CD8-positive, alpha-beta T cell (primary cell): ENCODE measurements at regions of chr3 and their contacts with region 1.

Region 1: DNA sequence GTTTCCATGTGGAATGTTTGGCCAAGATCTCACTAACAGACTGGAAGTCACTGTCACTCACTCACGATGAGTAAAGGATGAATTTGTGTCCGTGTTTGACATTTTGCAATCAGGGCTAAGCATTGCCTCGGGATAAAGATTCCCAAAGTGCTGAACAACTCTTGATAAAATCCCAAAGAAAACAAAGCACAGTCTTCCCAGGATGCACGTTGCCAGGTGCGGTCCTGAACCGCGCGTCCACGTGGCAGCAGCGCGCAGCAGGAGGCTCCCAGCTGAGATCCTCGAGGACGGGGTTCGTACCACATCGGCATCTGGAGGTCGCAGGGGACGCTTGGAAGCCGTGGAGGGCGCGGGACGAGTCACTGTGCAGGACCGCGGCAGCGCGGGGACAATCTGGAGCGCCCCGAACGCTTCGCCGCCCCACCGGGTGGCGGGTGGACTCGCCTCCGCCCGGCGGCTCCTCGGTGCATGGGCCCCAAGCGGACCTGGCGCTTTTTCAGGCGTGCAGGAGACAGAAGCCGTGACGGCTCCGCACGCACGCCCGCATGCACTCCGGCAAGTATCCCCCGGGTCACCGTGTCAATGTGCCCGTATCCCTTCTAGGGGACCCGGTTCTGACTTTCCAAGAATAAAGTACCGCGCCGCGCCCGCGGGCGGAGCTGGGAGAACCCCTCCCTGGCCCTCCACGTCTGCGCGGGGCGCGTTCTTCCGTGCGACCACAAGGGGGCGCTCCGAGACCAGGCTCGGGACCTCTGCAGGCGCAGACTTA is 17.7 kb downstream of the CPN2 start:
- DNase-seq: peak; percentile 80 to 95 (median 87)
- ATAC-seq: peak; percentile 97
- H3K4me3 ChIP-seq: peak overlapping the region; percentile 33 to 47
- H3K4me3 Mint-ChIP-seq: peak overlapping the region; percentile 67
- H3K27ac ChIP-seq: no peak overlapping the region
- H3K27ac Mint-ChIP-seq: no peak overlapping the region
- H3K4me1 ChIP-seq: no peaks in the 10 kb centered on the region
- H3K4me1 Mint-ChIP-seq: peaks cover 8% of the 10 kb centered on the region
- H3K27me3 ChIP-seq: peaks cover 4 to 6% of the 10 kb centered on the region in 2 experiments
- H3K27me3 Mint-ChIP-seq: peaks cover 24% of the 10 kb centered on the region
- CTCF ChIP-seq: peak; percentile 99

Region 2: DNA sequence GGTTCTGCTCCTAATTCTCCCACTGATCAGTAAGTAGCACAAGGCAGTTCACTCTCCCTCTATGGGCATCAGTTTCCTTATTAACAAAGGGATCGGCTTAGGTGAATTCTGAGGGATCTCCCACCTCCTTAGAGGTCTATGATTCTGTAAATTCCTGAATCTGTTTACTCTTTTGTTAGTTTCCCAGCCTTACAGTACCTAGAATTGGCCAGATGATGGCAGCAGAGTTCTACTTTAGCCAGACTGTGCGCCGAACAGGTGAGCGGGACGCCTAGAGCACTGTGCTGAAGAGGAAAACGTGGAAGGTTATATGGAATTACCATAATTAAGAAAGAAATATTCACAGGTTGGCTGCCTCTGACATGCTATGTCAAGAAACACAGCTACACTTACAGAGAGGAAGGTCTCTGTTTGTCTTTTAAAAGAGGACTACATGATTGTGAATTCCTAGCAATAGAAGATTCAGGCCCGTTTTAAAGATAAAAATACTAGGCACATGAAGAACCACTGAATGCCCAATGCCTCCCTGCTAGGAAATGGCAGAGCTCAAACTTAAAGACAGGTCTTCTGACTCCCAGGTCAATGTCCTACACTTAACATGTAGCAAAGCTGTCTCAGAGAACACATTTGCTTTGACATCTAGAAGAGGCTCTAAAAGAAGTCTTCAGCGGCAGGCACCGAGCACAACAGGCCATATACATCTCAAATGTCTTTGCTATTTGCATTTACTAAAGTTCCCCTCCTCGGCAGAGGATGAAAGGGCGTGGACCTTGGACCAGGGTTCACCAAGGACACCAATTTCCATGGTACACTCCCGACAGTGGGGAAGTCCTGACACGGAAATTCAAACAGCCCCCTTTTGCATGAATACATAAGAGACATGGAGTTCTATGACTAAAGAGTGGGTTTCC is 1865.9 kb before region 1 on chr3:
- CTCF ChIA-PET with region 1: no interaction called
- POLR2A ChIA-PET with region 1: no interaction called
- intact Hi-C with region 1: loop called in 1 of 2 experiments (anchors 5 kb)
- DNase-seq: peak in 8 of 9 experiments; percentile 12 to 51 (median 36)
- ATAC-seq: peak; percentile 69
- H3K4me3 ChIP-seq: no peak overlapping the region
- H3K4me3 Mint-ChIP-seq: no peak overlapping the region
- H3K27ac ChIP-seq: no peak overlapping the region
- H3K27ac Mint-ChIP-seq: no peak overlapping the region
- H3K4me1 ChIP-seq: no peaks in the 10 kb centered on the region
- H3K4me1 Mint-ChIP-seq: no peaks in the 10 kb centered on the region
- H3K27me3 ChIP-seq: no peaks in the 10 kb centered on the region
- H3K27me3 Mint-ChIP-seq: peaks cover 15% of the 10 kb centered on the region
- CTCF ChIP-seq: peak; percentile 76

Region 3: GRCh38 chr3:194344012-194344411 is 10.6 kb after region 1 on chr3:
- CTCF ChIA-PET with region 1: interaction called, 82 read pairs
- POLR2A ChIA-PET with region 1: no interaction called
- intact Hi-C with region 1: loop called in 1 of 2 experiments (anchors 1 kb)
- DNase-seq: peak; percentile 48 to 83 (median 71)
- ATAC-seq: peak; percentile 67
- H3K4me3 ChIP-seq: no peak overlapping the region
- H3K4me3 Mint-ChIP-seq: no peak overlapping the region
- H3K27ac ChIP-seq: no peak overlapping the region
- H3K27ac Mint-ChIP-seq: no peak overlapping the region
- H3K4me1 ChIP-seq: no peaks in the 10 kb centered on the region
- H3K4me1 Mint-ChIP-seq: no peaks in the 10 kb centered on the region
- H3K27me3 ChIP-seq: no peaks in the 10 kb centered on the region
- H3K27me3 Mint-ChIP-seq: peaks cover 10% of the 10 kb centered on the region
- CTCF ChIP-seq: peak; percentile 97

Region 4: DNA sequence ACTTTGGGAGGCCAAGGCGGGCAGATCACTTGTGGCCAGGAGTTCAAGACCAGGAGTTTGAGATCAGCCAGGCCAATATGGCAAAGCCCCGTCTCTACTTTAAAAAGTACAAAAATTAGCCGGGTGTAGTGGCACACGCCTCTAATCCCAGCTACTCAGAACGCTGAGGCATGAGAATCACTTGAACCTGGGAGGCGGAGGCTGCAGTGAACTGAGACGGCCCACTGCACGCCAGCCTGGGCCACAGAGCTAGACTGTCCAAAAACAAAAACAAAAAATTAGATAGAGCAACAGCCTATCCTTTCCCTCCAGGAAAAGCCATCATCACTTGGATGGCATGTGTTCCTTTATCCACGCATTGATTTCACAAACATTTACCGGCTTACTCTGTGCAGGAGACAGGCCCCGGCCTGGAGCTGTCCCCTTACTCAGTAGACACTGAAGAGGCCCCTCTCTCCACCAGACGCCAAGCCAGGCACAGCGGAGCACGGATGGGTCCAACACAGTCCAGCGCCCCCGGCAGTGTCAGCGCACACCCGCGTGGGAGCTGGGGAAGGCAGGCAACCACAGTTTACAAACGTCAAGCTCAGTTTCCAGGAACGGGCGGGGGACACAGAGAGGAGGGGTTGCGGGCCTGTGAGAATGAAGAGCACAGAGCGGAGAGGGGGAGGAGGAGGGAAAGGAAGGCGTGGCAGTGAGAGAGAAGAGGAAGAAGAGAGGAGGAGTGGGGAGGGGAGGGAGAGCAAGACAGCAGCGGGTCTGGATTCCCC is 62.6 kb after region 1 on chr3:
- CTCF ChIA-PET with region 1: interaction called, 140 read pairs
- POLR2A ChIA-PET with region 1: interaction called, 5 read pairs
- intact Hi-C with region 1: no loop called
- DNase-seq: peak in 8 of 9 experiments; percentile 23 to 80 (median 59)
- ATAC-seq: peak; percentile 72
- H3K4me3 ChIP-seq: peak overlapping the region; percentile 51 to 60
- H3K4me3 Mint-ChIP-seq: peak overlapping the region; percentile 81
- H3K27ac ChIP-seq: peak overlapping the region; percentile 48 to 63
- H3K27ac Mint-ChIP-seq: peak overlapping the region; percentile 82
- H3K4me1 ChIP-seq: peaks cover 30% of the 10 kb centered on the region
- H3K4me1 Mint-ChIP-seq: peaks cover 51% of the 10 kb centered on the region
- H3K27me3 ChIP-seq: peaks cover 0 to 3% of the 10 kb centered on the region in 2 experiments
- H3K27me3 Mint-ChIP-seq: peaks cover 2% of the 10 kb centered on the region
- CTCF ChIP-seq: no peak

Region 5: GRCh38 chr3:194592798-194593752 is 259.7 kb after region 1 on chr3:
- CTCF ChIA-PET with region 1: interaction called, 9 read pairs
- POLR2A ChIA-PET with region 1: no interaction called
- intact Hi-C with region 1: loop called in 1 of 2 experiments (anchors 2 kb)
- DNase-seq: no peak
- ATAC-seq: no peak
- H3K4me3 ChIP-seq: no peak overlapping the region
- H3K4me3 Mint-ChIP-seq: no peak overlapping the region
- H3K27ac ChIP-seq: no peak overlapping the region
- H3K27ac Mint-ChIP-seq: no peak overlapping the region
- H3K4me1 ChIP-seq: no peaks in the 10 kb centered on the region
- H3K4me1 Mint-ChIP-seq: peaks cover 4% of the 10 kb centered on the region
- H3K27me3 ChIP-seq: no peaks in the 10 kb centered on the region
- H3K27me3 Mint-ChIP-seq: no peaks in the 10 kb centered on the region
- CTCF ChIP-seq: no peak